Motor neuron (in vitro differentiated cells): ENCODE measurements at regions of chr3 and their contacts with region 1.

Region 1: DNA sequence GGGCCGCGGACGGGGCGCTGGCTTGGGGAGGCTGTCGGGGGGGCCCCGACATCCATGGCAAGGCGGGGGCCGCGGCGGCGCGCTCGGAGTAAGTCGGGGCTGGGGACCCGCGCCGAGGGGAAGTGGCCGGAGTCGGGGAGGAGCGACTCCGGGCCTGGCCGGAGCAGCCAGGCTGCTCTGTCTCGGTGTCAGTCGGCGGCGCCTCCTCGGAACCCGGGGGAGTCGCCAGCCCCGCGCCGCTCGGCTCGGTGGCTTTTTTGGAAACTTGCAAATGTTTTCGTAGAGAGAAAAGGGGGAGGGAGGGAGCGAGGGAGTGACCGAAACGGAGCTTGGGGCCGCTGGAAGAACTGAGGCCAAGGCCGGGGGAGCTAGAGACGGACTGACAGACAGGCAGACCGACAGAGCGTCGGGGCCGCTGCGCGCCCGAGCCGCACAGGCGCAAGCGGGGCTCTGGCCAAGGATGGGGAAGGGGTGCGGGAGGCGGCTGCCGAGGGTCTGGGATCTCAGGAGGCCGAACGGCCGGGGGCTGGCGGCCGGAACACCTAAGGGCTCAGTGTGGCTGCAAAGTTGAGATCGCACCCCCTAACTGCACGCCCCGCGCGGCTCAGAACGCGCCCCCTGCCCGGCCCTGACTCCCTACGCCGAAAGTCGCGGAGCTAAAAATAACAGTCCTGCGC is 5.0 kb downstream of the PTH1R start:
- ATAC-seq: peak; percentile 39 to 67 (median 58)
- H3K4me3 ChIP-seq: peak overlapping the region; percentile 36 to 50 (median 40)
- H3K27ac ChIP-seq: no peak overlapping the region
- H3K4me1 ChIP-seq: peaks cover 12 to 14% of the 10 kb centered on the region in 2 donors

Region 2: GRCh38 chr3:46517016-46517793 is 365.3 kb before region 1 on chr3:
- in situ Hi-C with region 1: no loop called
- ATAC-seq: peak in 2 of 8 experiments; percentile 31 to 61
- H3K4me3 ChIP-seq: no peak overlapping the region
- H3K27ac ChIP-seq: no peak overlapping the region
- H3K4me1 ChIP-seq: no peaks in the 10 kb centered on the region

Region 3: DNA sequence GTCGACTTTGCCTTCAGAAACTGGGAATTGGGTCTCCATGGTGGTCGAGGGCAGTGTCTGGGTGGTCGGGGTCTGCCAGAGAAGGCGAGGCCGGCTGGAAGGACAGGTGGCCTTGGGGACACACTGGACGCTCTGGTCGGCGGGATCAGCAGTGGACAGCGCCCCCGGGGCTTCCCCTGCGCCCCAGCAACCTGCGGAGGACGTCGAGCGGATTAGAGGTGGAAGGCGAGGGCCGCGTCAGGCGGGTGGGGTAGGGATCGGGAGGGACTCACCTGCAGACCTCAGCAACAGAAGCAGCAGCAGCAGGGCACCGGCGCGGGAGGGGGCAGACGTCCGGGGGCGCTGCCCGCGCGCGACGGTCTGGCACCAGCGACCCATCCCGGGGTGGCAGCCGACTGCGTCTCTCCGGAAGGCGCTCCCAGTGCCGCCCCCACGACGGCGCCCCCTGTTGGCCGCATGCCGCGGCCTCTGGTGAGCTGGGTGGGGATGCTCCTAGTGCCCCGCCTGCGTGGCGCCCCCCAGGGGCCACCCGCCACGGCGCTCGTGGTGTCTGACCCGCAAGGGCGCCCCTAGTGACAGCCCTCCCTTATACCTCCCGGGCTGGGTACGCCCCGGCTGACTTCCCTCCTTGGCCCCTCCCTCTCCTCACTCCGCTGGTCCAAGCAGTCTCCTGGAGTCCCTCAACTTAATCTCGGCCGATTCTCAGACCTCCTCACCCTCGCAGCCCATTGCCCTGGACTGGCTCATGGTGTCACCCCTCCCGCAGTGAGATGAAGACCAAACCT is 164.9 kb before region 1 on chr3 and contains the start of gene PRSS50:
- in situ Hi-C with region 1: loop called in 6 of 9 experiments (anchors 10 to 25 kb)
- ATAC-seq: peak in 1 of 8 experiments; percentile 78
- H3K4me3 ChIP-seq: no peak within 1 kb of the TSS
- H3K27ac ChIP-seq: no peak within 1 kb of the TSS
- H3K4me1 ChIP-seq: no peaks in the 10 kb centered on the region
- total RNA-seq, gene PRSS50: 0.08 to 0.85 (median 0.24) TPM in 4 of 8 experiments, not detected in the others

Region 4: DNA sequence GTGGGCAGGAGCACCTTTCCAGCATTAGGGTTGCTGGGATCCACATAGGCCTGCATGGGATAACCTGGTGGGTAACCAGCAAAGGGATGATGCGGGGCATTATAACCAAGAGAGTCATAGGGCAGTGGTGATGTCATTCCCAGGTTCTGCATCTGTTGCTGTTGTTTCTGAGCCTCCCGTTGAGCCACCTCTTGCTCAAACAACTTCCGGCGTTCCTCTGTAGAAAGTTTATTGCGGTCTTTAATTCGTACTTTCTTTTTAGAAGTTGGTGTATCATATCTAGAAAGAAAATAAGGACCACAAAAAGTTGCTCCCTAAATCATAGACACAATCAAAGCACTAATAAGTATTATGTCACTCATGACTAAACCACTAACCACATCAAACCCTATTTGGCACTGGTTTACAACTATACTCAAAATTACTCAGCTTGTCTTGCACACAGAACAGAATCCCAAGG is 174.7 kb after region 1 on chr3:
- in situ Hi-C with region 1: no loop called
- ATAC-seq: no peak
- H3K4me3 ChIP-seq: no peak overlapping the region
- H3K27ac ChIP-seq: no peak overlapping the region
- H3K4me1 ChIP-seq: no peaks in the 10 kb centered on the region